ENCODE measurements at regions of chr15 and their contacts with region 1.

Region 1: GRCh38 chr15:35054380-35054779 is 30.7 kb downstream of the NANOGP8 start:
- DNase-seq: no peak
- H3K4me3 ChIP-seq: no peak overlapping the region
- H3K27ac ChIP-seq: no peak overlapping the region
- H3K4me1 ChIP-seq: no peaks in the 10 kb centered on the region
- CTCF ChIP-seq: no peak

Region 2: GRCh38 chr15:35115155-35115725 is 60.9 kb after region 1 on chr15:
- CTCF ChIA-PET with region 1: no interaction called
- POLR2A ChIA-PET with region 1: no interaction called
- intact Hi-C with region 1: loop called (anchors 10 kb)
- DNase-seq: no peak
- H3K4me3 ChIP-seq: no peak overlapping the region
- H3K27ac ChIP-seq: no peak overlapping the region
- H3K4me1 ChIP-seq: no peaks in the 10 kb centered on the region
- CTCF ChIP-seq: no peak